Activated B cell treated with CpG ODN at 0.5 μM for 24 hours (primary cell): ENCODE measurements at regions of chr9 and their contacts with region 1.

Region 1: DNA sequence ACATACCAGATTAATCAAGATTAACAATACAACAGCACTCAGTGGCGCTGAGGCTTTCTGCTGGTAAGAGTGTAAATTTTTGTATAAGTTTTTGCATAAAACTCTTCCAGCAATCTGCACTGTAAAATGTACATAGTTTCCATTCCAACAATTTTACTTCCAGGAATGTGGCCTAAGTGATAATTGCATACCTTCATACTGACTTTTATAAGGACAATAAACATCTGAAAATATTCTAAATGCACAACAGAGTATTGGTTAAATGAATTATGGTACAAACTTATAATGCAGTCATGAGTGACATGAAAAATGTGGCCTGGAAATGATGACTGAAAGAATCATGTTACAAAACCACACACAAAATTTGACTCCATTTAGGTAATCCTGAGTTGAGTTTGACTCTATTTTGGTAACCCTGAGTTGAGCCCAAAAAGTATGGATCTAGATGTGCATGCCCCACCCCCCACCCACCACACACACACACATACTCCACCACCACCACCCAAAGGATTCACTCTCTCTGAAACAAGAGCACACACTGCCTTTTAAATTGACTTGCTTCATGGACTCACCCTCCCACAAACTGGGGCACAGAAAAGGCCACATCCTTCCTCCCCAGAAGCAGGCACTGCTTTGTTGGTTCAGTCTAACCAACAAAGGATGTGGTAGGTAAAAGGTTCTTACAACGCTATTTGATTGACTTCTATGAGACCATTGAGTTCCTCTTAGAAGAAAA is 137.6 kb downstream of the SUSD1 start:
- DNase-seq: no peak
- ATAC-seq: peak; percentile 65
- H3K4me3 Mint-ChIP-seq: peak overlapping the region; percentile 68
- H3K27ac Mint-ChIP-seq: peak overlapping the region; percentile 96
- H3K4me1 Mint-ChIP-seq: peaks cover 88% of the 10 kb centered on the region
- H3K27me3 Mint-ChIP-seq: no peaks in the 10 kb centered on the region
- CTCF ChIP-seq: no peak

Region 2: DNA sequence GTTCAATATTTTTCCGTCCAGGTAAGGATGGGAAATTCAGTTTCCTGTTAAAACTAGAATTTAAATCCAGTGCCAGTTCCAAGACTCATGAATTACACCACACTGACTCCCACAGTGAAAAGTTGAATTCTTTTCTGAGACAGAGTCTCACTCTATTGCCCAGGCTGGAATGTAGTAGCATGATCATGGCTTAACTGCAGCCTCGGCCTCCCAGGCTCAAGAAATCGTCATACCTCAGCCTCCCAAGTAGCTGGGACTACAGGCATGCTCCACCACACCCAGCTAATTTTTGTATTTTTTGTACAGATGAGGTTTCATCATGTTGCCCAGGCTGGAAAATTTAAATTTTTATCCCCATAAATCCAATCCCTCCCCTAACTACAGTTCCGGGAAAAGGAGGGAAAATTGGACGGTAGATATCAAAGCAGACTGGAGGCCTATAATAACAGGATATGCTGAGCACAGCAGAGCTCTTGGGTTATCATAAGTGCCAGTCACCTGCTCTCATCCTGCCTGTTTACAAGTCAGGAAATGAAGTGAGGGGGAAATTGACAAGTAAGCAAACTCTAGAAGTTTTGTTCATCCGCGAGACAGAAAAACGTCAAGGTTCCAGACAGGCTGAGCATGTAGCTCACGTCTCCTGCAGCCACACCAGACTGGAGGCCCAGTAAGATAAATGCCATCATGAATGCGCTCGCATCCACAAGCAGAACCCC is 35.2 kb before region 1 on chr9:
- CTCF ChIA-PET with region 1: interaction called, 4 read pairs
- POLR2A ChIA-PET with region 1: interaction called, 55 read pairs
- intact Hi-C with region 1: no loop called
- DNase-seq: no peak
- ATAC-seq: no peak
- H3K4me3 Mint-ChIP-seq: peak overlapping the region; percentile 6
- H3K27ac Mint-ChIP-seq: peak overlapping the region; percentile 54
- H3K4me1 Mint-ChIP-seq: peaks cover 49% of the 10 kb centered on the region
- H3K27me3 Mint-ChIP-seq: no peaks in the 10 kb centered on the region
- CTCF ChIP-seq: no peak

Region 3: GRCh38 chr9:112012026-112012902 is 25.2 kb before region 1 on chr9:
- CTCF ChIA-PET with region 1: interaction called, 10 read pairs
- POLR2A ChIA-PET with region 1: interaction called, 308 read pairs
- intact Hi-C with region 1: loop called (anchors 1 kb)
- DNase-seq: no peak
- ATAC-seq: peak; percentile 85
- H3K4me3 Mint-ChIP-seq: peak overlapping the region; percentile 47
- H3K27ac Mint-ChIP-seq: peak overlapping the region; percentile 93
- H3K4me1 Mint-ChIP-seq: peaks cover 84% of the 10 kb centered on the region
- H3K27me3 Mint-ChIP-seq: no peaks in the 10 kb centered on the region
- CTCF ChIP-seq: no peak

Region 4: GRCh38 chr9:112061152-112061740 is 23.8 kb after region 1 on chr9:
- CTCF ChIA-PET with region 1: interaction called, 4 read pairs
- POLR2A ChIA-PET with region 1: interaction called, 47 read pairs
- intact Hi-C with region 1: loop called (anchors 1 kb)
- DNase-seq: no peak
- ATAC-seq: peak; percentile 70
- H3K4me3 Mint-ChIP-seq: no peak overlapping the region
- H3K27ac Mint-ChIP-seq: peak overlapping the region; percentile 85
- H3K4me1 Mint-ChIP-seq: peaks cover 67% of the 10 kb centered on the region
- H3K27me3 Mint-ChIP-seq: no peaks in the 10 kb centered on the region
- CTCF ChIP-seq: no peak

Region 5: GRCh38 chr9:112711050-112711689 is 673.7 kb after region 1 on chr9:
- CTCF ChIA-PET with region 1: no interaction called
- POLR2A ChIA-PET with region 1: no interaction called
- intact Hi-C with region 1: no loop called
- DNase-seq: no peak
- ATAC-seq: no peak
- H3K4me3 Mint-ChIP-seq: no peak overlapping the region
- H3K27ac Mint-ChIP-seq: no peak overlapping the region
- H3K4me1 Mint-ChIP-seq: peaks cover 4% of the 10 kb centered on the region
- H3K27me3 Mint-ChIP-seq: no peaks in the 10 kb centered on the region
- CTCF ChIP-seq: no peak